Heart left ventricle (tissue), 16 donors: ENCODE measurements at regions of chr5 and their contacts with region 1.

Region 1: GRCh38 chr5:902129-902916 is 9.6 kb downstream of the TRIP13 start:
- DNase-seq: no peak
- ATAC-seq: no peak
- H3K4me3 ChIP-seq: no peak overlapping the region
- H3K27ac ChIP-seq: no peak overlapping the region
- H3K4me1 ChIP-seq: peaks cover 0 to 4% (median 0%) of the 10 kb centered on the region in 12 donors
- H3K27me3 ChIP-seq: no peaks in the 10 kb centered on the region
- CTCF ChIP-seq: no peak
- POLR2A ChIP-seq: no peak

Region 2: DNA sequence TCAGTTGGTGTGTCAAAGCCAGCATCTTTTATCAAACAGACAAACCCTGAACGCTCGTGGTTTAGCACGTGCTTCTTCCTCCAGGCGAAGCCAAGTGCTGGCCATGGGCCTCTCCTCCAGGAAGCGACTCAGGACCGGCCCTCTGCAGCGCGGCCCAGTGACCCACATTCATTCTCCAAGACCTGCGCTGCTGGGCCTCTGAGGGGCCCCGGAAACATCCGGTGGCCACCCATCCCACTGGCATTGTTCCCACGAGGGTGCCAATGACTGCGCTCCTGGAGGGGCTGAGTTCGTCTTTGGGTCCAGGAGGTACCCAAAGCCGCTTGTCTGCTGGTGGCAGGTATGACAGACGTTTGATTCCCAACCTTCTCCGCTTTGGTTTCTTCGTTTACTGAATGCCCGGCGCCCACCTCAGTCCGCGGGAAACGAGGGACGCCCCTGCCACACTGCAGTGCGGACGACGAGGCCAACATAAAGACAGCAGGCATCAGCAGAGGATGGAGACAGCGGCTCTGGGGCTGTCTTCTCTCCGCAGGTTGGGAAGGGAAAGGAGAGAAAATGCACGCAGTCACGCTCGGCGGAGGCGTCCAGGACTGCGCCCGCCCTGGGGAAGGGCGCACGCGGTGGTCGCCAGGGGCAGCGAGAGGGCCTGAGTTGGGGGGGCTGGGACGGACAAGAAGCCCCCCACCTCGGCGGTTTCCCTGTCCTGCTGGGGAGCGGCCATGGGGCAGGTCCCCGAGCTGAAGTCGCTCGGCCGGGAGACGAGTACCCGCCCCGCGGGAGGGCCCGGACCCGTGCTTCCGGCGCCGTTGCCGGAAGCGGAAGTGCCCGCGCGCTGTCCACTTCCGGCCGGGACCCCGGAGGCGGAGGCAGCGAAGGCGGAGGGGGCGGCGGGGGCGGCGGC is 459.7 kb before region 1 on chr5 and contains the start of gene EXOC3:
- intact Hi-C with region 1: loop called in 5 of 10 experiments (anchors 10 kb)
- DNase-seq: peak; percentile 75 to 89 (median 82)
- ATAC-seq: peak; percentile 72 to 95 (median 92)
- H3K4me3 ChIP-seq: peak within 1 kb of the TSS; percentile 66 to 98 (median 88)
- H3K27ac ChIP-seq: peak within 1 kb of the TSS in 11 of 12 donors; percentile 69 to 91 (median 85)
- H3K4me1 ChIP-seq: peaks cover 6 to 28% (median 15%) of the 10 kb centered on the region in 12 donors
- H3K27me3 ChIP-seq: peaks cover 0 to 3% (median 0%) of the 10 kb centered on the region in 9 donors
- CTCF ChIP-seq: no peak
- POLR2A ChIP-seq: peak in 1 of 2 donors; percentile 76
- total RNA-seq, gene EXOC3: 33.6 to 45.5 (median 42.8) TPM

Region 3: DNA sequence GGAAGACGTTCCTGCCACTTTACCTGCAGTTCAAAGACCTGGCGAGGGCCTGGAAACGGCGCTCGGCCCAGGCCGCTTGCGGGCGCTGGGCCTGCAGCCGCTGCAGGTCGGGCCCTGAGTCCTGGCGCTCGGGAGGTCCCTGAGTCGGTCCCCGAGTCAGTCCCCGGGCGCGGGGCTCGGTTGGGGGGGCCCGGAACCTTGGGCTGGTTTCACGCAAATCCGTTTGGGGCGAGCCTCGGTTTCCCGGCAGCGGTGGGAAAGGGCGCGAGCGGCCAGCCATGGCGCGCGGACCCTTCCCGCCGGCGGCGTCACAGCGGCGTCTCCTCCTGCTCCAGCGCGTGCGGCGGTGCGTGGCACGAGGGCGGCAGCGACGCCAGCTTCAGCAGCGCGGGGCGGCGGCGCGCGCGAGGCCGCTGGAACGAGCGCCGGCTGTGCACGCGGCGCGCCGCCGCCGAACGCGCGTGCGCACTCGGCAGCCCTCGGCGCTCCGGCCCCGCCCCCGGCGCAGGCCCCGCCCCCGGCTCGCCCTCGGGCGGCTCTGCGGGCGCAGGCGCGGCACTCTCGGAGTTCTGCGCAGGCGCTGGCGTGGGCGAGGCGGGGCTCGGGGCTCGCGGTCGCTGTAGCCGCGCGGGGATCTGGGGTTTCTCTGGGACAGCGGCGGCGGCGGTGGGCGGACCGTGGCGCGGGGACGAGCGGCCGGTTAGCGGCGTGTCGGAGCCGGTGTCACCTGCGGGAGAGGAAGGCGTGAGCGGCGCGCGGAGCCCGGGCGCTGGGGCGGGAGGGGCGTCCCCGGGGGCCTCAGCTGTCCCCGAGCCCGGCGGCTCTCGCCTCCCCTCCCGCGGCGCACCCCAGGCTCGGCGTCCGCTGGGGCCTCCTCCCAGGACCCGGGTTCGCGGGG is 429.4 kb before region 1 on chr5:
- intact Hi-C with region 1: loop called in 1 of 10 experiments (anchors 10 kb)
- DNase-seq: peak; percentile 89 to 95 (median 91)
- ATAC-seq: peak; percentile 66 to 88 (median 86)
- H3K4me3 ChIP-seq: peak overlapping the region; percentile 86 to 99 (median 92)
- H3K27ac ChIP-seq: peak overlapping the region; percentile 53 to 92 (median 80)
- H3K4me1 ChIP-seq: peaks cover 3 to 40% (median 18%) of the 10 kb centered on the region in 12 donors
- H3K27me3 ChIP-seq: peaks cover 0 to 33% (median 24%) of the 10 kb centered on the region in 9 donors
- CTCF ChIP-seq: peak in 1 of 12 donors; percentile 54
- POLR2A ChIP-seq: peak in 1 of 2 donors; percentile 91

Region 4: DNA sequence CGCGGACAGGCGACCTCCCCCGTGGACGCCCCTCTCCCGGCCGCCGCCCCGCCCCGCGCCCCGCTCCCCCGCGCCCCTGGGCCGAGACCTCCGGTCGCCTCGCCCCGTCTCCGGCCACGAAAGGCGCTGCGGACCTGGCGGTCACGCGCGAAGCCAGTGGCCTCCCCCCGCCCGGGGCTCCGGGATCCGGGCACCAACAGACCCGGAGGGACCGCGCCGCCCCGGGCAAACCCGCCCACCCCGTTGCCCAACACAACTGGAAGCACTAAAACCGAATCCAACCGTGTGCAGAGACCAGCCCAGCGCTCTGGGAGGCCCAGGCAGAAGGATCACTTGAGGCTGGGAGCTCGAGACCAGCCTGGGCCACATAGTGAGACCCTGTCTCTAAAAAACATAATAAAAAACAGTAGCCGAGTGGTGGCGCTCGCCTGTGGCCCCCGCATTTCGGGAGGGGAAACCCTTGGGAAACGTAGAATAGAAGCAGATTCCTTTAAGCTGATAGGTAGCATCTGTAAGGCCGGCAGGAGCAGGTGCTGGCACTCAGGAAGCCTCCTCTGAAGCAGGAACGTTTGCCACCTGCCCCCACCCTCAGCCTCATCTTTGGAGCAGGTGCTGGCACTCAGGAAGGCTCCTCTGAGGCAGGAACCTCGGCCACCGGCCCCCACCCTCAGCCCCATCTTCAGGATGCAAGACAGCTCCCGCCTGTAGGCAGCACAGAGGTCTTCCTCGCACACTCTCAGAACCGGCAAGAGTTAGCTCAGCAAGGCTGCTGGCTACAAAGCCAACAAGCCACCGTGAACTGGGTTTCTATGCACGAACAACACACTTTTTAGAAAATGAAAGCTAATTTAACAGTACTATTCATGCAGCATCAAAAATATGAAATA is 373.5 kb before region 1 on chr5:
- intact Hi-C with region 1: no loop called
- DNase-seq: peak in 2 of 5 donors; percentile 9 to 15
- ATAC-seq: no peak
- H3K4me3 ChIP-seq: no peak overlapping the region
- H3K27ac ChIP-seq: no peak overlapping the region
- H3K4me1 ChIP-seq: peaks cover 0 to 32% (median under 1%) of the 10 kb centered on the region in 12 donors
- H3K27me3 ChIP-seq: peaks cover 45 to 100% (median 76%) of the 10 kb centered on the region in 9 donors
- CTCF ChIP-seq: no peak
- POLR2A ChIP-seq: no peak